ENCODE measurements at regions of chr3 and their contacts with region 1.

Region 1: DNA sequence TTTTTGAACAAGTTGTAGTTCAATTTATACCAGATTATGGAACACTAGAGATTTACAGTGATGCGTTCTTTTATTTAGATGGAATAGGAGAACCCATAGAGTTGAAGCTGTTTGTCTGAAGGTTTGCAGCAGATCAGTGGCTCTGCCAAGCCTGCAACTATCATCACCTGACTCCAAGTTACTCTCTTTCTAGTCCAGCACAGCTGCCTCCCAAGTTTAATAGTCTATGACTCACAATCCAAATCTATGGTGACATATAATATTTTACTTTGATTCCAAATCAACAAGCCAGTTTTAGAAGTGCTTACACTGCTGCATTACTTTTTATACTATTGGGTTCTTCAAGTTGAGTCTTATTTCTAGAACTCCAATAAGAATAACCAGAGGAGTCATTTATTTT is 400.4 kb downstream of the LPP start:
- DNase-seq: peak; percentile 83 to 85
- ATAC-seq: peak; percentile 97
- H3K4me3 ChIP-seq: no peak overlapping the region
- H3K27ac ChIP-seq: peak overlapping the region; percentile 65 to 87 (median 78)
- H3K4me1 ChIP-seq: peaks cover 40 to 49% of the 10 kb centered on the region in 2 donors
- H3K27me3 ChIP-seq: no peaks in the 10 kb centered on the region
- CTCF ChIP-seq: no peak
- POLR2A ChIP-seq: no peak

Region 2: DNA sequence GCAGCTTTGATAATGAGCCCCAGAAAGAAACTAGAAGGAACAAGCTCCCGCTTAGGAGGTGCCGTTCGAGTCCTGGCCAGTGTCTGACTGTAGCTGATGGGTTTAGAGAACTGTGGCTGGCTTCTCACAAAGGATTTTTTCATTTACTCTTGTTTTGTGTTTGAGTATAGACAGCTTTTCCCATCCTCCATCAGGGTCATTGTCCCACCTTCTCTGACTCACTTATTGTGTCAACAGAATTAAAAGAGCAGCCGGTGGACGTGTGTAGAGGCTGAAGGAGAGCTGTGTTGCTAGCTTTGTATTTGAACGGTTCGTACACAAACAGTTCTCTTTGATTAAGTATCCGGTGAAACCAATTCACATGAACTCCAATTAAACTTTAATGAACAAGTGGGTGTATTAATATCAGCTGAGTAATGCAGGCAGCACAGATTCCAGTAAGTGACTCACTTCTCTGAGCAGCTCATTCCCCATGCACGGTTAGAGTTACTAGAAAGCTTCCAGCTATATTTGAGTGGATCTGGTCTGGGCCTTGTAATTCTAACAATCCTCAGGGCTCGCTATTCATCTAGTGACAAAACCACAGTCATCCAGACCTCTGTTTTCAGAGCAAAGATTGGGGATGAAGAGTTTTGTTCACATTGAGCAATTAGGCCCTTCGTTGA is 259.4 kb before region 1 on chr3:
- in situ Hi-C with region 1: no loop called
- intact Hi-C with region 1: loop called (anchors 5 kb)
- DNase-seq: peak; percentile 59 to 60
- ATAC-seq: peak; percentile 98
- H3K4me3 ChIP-seq: peak overlapping the region; percentile 16 to 28 (median 24)
- H3K27ac ChIP-seq: peak overlapping the region; percentile 84 to 89 (median 86)
- H3K4me1 ChIP-seq: peaks cover 44 to 47% of the 10 kb centered on the region in 2 donors
- H3K27me3 ChIP-seq: no peaks in the 10 kb centered on the region
- CTCF ChIP-seq: no peak
- POLR2A ChIP-seq: no peak

Region 3: GRCh38 chr3:188421836-188422540 is 132.4 kb before region 1 on chr3:
- in situ Hi-C with region 1: no loop called
- intact Hi-C with region 1: loop called (anchors 2 kb)
- DNase-seq: no peak
- ATAC-seq: no peak
- H3K4me3 ChIP-seq: no peak overlapping the region
- H3K27ac ChIP-seq: peak overlapping the region; percentile 31 to 50 (median 47)
- H3K4me1 ChIP-seq: peaks cover 21% of the 10 kb centered on the region in 2 donors
- H3K27me3 ChIP-seq: no peaks in the 10 kb centered on the region
- CTCF ChIP-seq: no peak
- POLR2A ChIP-seq: no peak

Region 4: GRCh38 chr3:188489639-188490405 is 64.6 kb before region 1 on chr3:
- in situ Hi-C with region 1: no loop called
- intact Hi-C with region 1: no loop called
- DNase-seq: no peak
- ATAC-seq: no peak
- H3K4me3 ChIP-seq: no peak overlapping the region
- H3K27ac ChIP-seq: peak overlapping the region; percentile 14 to 44 (median 30)
- H3K4me1 ChIP-seq: peaks cover 13% of the 10 kb centered on the region in 2 donors
- H3K27me3 ChIP-seq: no peaks in the 10 kb centered on the region
- CTCF ChIP-seq: no peak
- POLR2A ChIP-seq: no peak

Region 5: DNA sequence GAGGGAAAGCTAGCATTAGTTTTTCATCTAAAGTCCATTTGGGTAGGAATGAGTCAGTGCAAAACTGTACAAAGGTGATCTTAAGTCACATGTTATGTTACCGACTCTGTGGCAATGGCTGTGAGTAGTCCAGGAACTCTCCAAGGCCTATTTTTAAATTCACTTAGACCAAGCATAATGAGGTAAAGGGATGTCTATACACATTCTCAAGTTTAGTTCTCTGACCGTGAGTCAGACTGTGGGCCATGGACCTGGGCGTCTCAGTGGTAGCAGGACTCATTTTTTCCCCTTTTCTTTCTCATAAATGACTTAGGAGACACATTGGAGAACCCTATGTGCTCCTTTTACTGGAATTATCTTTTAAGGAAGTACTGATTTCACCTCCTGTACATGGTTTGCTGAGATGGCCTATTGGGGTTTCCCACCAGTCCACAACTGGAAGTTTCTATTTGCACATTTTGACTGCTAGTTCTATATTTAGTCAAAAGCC is 128.7 kb after region 1 on chr3:
- in situ Hi-C with region 1: no loop called
- intact Hi-C with region 1: loop called (anchors 5 kb)
- DNase-seq: peak; percentile 61 to 73
- ATAC-seq: peak; percentile 99 to 100
- H3K4me3 ChIP-seq: no peak overlapping the region
- H3K27ac ChIP-seq: peak overlapping the region; percentile 73 to 90 (median 78)
- H3K4me1 ChIP-seq: peaks cover 40 to 44% of the 10 kb centered on the region in 2 donors
- H3K27me3 ChIP-seq: no peaks in the 10 kb centered on the region
- CTCF ChIP-seq: no peak
- POLR2A ChIP-seq: peak; percentile 32 to 73